GM18951 (cell line): ENCODE measurements at regions of chr1 and their contacts with region 1.

Region 1: GRCh38 chr1:56578963-56579875 is at the start of gene PLPP3:
- POLR2A ChIP-seq: peak; percentile 19

Region 2: DNA sequence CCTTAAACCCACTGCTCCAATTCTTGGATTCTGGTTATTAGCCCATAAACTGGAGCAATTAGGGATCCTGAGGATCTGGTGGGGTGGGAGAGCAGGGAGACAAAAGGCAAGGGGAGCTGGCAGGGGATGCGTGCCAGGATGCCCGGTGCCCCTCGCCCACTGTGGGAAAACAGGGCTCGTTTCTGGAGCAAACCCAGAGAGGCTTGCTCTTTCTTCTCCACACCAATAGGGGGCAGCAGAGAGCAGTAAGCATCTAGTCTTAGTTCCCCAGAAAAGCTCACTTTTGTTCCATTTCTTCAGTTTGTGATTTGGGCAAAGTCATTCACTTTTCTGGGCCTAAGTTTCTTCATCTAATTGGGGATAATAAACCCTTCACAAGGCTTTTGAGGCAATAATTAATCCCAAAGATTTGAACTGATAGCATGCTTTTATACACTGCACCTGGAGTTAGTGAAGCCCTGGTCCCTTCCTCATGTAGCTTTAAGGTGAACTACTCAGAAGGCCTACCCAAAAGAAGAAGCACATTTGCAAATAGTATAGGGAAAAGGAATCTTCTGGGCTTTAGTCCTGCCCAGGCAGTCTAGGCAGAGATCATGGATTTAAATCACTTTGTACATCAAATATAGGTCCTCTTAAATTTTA is 1203.5 kb before region 1 on chr1:
- in situ Hi-C with region 1: loop called (anchors 25 kb)
- POLR2A ChIP-seq: no peak